OCI-LY7 (cell line): ENCODE measurements at regions of chr16 and their contacts with region 1.

Region 1: GRCh38 chr16:58418601-58419000 is 26.3 kb downstream of the GINS3 start:
- DNase-seq: peak; percentile 50
- H3K4me3 ChIP-seq: peak overlapping the region; percentile 51
- H3K27ac ChIP-seq: peak overlapping the region; percentile 100
- H3K4me1 ChIP-seq: peaks cover 90% of the 10 kb centered on the region
- CTCF ChIP-seq: no peak

Region 2: GRCh38 chr16:58336332-58337089 is 82.1 kb before region 1 on chr16:
- CTCF ChIA-PET with region 1: no interaction called
- POLR2A ChIA-PET with region 1: interaction called, 3 read pairs
- intact Hi-C with region 1: loop called (anchors 1 kb)
- DNase-seq: peak; percentile 86
- H3K4me3 ChIP-seq: no peak overlapping the region
- H3K27ac ChIP-seq: no peak overlapping the region
- H3K4me1 ChIP-seq: peaks cover 26% of the 10 kb centered on the region
- CTCF ChIP-seq: peak; percentile 99

Region 3: DNA sequence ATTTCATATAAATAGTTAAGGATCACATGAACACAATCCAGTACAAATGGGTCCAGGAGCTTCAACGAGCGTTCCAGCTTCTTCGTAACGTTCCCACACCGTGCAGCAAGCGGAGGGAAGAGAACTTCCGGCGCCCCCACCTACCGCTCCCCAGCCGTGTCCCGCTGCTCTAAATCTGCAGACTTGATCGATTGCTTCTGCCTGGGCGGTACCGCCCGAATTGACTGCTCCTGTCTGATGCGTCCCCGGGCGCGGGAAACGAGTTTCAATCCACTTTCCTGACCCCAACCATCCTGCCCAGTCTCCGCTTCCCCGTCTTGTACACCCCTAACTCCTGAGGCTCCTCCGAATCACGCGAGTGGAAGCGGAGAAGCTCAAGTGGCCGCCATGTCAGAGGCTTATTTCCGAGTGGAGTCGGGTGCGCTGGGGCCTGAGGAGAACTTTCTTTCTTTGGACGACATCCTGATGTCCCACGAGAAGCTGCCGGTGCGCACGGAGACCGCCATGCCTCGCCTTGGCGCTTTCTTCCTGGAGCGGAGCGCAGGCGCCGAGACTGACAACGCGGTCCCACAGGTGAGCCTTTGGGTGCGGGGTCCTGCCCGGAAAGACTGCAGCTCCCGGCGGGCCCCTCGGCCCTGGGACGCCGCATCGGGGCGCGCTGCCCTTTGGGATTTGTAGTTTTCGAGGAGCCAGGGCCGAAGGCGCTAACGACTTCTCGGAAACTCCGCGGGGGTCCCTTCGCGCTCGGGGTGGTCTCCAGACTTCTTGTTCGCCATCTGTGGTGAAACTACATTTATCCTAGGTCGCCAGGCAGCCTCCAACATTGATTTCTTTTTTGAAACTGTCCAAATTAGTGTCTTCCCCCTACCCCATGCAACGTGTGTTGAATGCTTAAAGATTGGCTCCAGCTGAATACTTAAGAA is 26.1 kb before region 1 on chr16 and contains the start of gene GINS3:
- CTCF ChIA-PET with region 1: interaction called, 4 read pairs
- POLR2A ChIA-PET with region 1: interaction called, 66 read pairs
- intact Hi-C with region 1: loop called (anchors 1 kb)
- DNase-seq: peak; percentile 95
- H3K4me3 ChIP-seq: peak within 1 kb of the TSS; percentile 86
- H3K27ac ChIP-seq: peak within 1 kb of the TSS; percentile 79
- H3K4me1 ChIP-seq: peaks cover 17% of the 10 kb centered on the region
- CTCF ChIP-seq: no peak
- total RNA-seq, gene GINS3: 35.7 and 49.1 TPM in 2 replicates

Region 4: GRCh38 chr16:58471321-58471975 is 52.8 kb after region 1 on chr16:
- CTCF ChIA-PET with region 1: no interaction called
- POLR2A ChIA-PET with region 1: interaction called, 10 read pairs
- intact Hi-C with region 1: loop called (anchors 5 kb)
- DNase-seq: peak; percentile 42
- H3K4me3 ChIP-seq: no peak overlapping the region
- H3K27ac ChIP-seq: no peak overlapping the region
- H3K4me1 ChIP-seq: peaks cover 39% of the 10 kb centered on the region
- CTCF ChIP-seq: no peak

Region 5: GRCh38 chr16:58487566-58488351 is 69.2 kb after region 1 on chr16:
- CTCF ChIA-PET with region 1: interaction called, 4 read pairs
- POLR2A ChIA-PET with region 1: interaction called, 3 read pairs
- intact Hi-C with region 1: loop called (anchors 2 kb)
- DNase-seq: peak; percentile 88
- H3K4me3 ChIP-seq: peak overlapping the region; percentile 29
- H3K27ac ChIP-seq: no peak overlapping the region
- H3K4me1 ChIP-seq: peaks cover 15% of the 10 kb centered on the region
- CTCF ChIP-seq: peak; percentile 90

Region 6: DNA sequence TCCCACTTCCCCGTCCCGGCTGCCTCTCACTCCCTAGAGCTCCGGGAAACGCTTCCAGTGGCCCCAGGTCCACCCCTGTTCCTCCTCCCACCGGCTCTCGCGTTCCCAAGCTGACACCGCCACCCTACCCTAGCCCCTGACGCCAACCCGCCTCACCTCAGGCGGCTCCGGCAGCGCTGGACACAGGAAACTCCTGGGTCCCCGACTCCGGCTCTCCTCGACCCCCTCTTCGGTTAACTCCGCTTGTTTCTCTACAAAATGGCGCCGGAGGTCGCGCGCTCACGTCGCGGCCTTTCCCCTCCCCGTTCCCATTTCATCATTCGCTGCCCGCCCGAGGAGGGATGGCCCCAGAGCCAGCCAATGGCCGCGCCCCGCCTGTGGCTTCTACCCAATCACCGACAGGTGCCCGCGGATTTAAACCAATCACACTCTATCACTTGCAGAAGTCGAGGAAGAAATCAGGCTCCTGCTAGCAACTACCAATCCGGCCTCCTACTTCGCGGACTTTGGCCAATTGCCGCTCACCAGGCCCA is 211.0 kb after region 1 on chr16 and contains the start of gene CNOT1:
- CTCF ChIA-PET with region 1: no interaction called
- POLR2A ChIA-PET with region 1: interaction called, 3 read pairs
- intact Hi-C with region 1: loop called (anchors 5 kb)
- DNase-seq: peak; percentile 99
- H3K4me3 ChIP-seq: peak within 1 kb of the TSS; percentile 97
- H3K27ac ChIP-seq: peak within 1 kb of the TSS; percentile 87
- H3K4me1 ChIP-seq: peaks cover 25% of the 10 kb centered on the region
- CTCF ChIP-seq: no peak
- total RNA-seq, gene CNOT1: 209 and 230 TPM in 2 replicates

Region 7: DNA sequence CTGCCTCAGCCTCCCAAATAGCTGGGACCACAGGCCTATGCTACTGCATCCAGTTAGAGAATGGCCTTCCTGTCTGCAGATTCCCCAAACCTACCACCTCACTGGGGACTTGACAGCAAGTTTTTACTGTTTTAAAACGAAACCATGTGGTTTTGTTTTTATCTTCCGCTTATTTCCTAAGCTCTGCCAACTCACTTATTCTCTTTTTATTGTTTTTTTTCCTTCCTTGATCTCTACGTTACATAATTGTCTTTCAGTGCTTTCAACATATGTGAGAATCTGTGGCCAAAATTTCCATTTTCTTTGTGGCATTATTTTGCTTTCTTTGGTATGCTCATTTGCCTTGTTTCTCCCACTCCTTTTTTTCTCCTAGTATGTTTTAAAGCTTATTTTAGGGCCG is 280.6 kb after region 1 on chr16:
- CTCF ChIA-PET with region 1: no interaction called
- POLR2A ChIA-PET with region 1: no interaction called
- intact Hi-C with region 1: no loop called
- DNase-seq: peak; percentile 8
- H3K4me3 ChIP-seq: no peak overlapping the region
- H3K27ac ChIP-seq: no peak overlapping the region
- H3K4me1 ChIP-seq: no peaks in the 10 kb centered on the region
- CTCF ChIP-seq: no peak

Region 8: DNA sequence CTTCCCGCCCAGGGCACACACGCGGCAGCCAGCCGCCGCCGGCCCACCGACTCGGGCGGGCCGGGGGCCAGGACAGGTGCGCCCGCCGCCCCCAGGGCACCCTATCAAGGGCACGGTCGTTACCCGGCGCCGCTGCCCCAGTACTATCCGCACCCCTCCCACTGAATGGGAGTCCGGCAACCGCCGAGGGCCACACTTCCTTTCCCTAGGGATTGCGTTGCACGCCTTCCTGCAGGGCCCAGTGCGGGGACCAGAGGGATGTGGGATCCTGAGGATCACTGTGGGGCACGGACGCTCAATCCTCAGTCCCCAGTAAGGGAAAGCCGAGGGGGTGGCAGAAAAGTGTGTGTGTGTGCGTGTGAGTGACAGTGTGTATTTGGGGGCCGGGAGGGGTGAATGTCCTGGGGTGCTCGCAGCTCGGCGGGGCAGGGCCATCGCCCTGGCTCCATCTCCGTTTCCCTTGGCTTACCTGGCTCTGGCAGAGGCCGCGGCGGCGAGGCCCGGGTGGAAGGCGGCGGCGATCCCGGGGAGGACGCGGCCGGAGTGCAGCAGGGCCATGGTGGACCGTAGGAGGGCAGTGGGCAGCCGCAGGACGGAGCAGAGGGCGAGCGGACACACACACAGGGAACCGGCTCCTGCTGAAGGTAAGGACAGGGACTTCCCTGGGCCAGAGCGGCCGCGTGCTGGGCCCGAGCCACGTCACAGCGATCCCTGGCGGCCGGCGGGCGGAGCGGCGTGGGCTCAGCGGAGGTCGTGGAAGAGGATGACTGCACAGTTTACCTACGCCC is 315.3 kb after region 1 on chr16 and contains the start of gene GOT2:
- CTCF ChIA-PET with region 1: no interaction called
- POLR2A ChIA-PET with region 1: no interaction called
- intact Hi-C with region 1: loop called (anchors 5 kb)
- DNase-seq: peak; percentile 90
- H3K4me3 ChIP-seq: peak within 1 kb of the TSS; percentile 98
- H3K27ac ChIP-seq: peak within 1 kb of the TSS; percentile 68
- H3K4me1 ChIP-seq: peaks cover 49% of the 10 kb centered on the region
- CTCF ChIP-seq: peak; percentile 89
- total RNA-seq, gene GOT2: 90.8 and 104 TPM in 2 replicates